ENCODE measurements at regions of chr2 and their contacts with region 1.

Region 1: DNA sequence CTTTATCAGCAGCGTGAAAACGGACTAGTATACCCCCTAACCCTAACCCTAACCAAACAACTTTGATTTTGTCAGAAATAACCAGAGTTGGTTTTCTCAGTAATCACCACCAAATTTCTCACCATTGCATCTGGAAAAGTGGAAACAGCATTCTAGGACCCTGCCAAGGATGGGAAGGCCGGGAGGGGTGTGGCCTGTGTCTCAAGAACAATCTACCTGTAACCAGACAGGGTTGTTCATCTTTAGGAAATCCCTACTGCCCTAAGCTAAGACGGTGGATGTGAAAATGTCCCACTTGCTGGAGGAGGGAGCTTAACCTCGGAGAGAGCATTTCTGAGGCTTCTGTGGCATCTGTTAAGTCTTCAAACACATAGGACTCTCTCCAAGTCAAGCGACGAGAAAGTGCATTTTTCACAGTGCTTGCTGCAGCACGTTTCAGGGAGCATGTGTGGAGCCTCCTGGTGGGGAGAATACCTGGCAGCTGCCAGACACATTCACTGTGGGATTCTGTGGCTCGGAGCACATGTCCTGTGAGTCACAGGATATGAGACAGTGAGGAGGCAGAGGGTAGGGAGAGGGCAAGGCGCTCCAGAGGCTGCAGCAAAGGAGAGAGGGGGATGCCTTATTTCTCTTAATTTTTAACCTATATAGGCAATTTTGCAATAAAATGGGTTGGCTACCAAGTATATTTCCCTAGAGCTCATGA is 207.5 kb downstream of the SPP2 start:
- DNase-seq: peak; percentile 96
- H3K4me3 ChIP-seq: no peak overlapping the region
- H3K27ac ChIP-seq: peak overlapping the region; percentile 70
- H3K4me1 ChIP-seq: peaks cover 11% of the 10 kb centered on the region
- H3K27me3 ChIP-seq: no peaks in the 10 kb centered on the region
- CTCF ChIP-seq: peak; percentile 84 to 87
- POLR2A ChIP-seq: peak; percentile 37

Region 2: DNA sequence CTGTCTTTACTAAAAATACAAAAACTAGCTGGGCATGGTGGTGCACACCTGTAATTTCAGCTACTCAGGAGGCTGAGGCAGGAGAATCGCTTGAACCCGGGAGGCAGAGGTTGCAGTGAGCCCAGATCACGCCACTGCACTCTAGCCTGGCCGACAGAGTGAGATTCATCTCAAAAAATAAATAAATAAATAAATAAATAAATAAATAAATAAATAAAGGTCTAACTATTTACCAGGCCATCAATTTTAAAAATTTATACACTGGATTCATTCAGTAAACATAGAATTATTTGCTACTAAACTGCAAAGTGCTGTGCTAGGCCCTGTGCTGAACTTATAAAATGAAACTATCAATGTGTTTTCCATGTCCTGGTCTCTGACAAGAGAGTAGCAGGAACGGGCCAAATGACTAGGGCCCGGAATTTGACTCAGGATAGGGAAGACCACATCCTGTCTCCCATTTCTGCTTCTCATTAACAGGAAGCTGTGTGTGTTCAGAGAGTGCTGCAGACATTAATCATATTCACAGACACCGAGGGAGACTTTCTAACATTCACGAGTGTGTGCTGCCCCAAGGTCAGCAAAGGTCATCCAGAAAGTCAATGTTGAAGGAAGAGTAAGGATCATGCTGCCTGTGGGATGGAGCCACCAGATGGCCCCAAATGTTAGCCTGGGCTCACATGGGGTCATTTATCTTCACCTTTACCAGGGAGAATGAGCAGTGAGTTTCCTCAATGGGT is 111.8 kb before region 1 on chr2:
- CTCF ChIA-PET with region 1: interaction called, 4 read pairs
- POLR2A ChIA-PET with region 1: no interaction called
- dilution Hi-C with region 1: no loop called
- intact Hi-C with region 1: loop called (anchors 1 kb)
- DNase-seq: peak; percentile 78
- H3K4me3 ChIP-seq: no peak overlapping the region
- H3K27ac ChIP-seq: peak overlapping the region; percentile 78
- H3K4me1 ChIP-seq: peaks cover 10% of the 10 kb centered on the region
- H3K27me3 ChIP-seq: no peaks in the 10 kb centered on the region
- CTCF ChIP-seq: no peak
- POLR2A ChIP-seq: no peak

Region 3: GRCh38 chr2:234203135-234203984 is 54.6 kb before region 1 on chr2:
- CTCF ChIA-PET with region 1: interaction called, 13 read pairs
- POLR2A ChIA-PET with region 1: no interaction called
- dilution Hi-C with region 1: no loop called
- intact Hi-C with region 1: loop called (anchors 1 kb)
- DNase-seq: peak; percentile 98
- H3K4me3 ChIP-seq: peak overlapping the region in 1 of 3 experiments; percentile 14
- H3K27ac ChIP-seq: peak overlapping the region; percentile 93
- H3K4me1 ChIP-seq: peaks cover 17% of the 10 kb centered on the region
- H3K27me3 ChIP-seq: no peaks in the 10 kb centered on the region
- CTCF ChIP-seq: no peak
- POLR2A ChIP-seq: no peak

Region 4: DNA sequence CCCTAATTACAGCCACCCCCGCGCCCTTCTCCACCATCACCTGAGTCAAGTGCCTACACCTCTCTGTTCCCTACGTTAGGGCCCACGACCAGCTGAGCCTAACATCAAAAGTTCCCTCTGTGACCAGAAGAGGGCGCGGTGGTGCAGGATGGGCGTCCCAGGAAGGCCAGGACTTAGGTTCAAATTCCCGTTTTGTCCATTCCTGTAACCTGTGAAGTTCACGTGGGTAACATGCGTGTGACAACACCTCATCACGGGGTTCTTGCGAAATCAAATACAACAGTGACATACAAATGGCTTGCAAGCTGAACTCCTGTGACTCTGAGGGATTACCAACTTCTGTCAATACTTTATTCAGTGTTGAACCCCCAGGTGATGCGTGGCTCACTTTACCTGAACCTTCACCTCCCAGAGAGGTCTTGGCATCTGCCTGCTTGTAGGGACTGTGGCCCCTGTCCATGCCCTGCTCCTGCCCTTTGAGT is 31.0 kb after region 1 on chr2:
- CTCF ChIA-PET with region 1: no interaction called
- POLR2A ChIA-PET with region 1: no interaction called
- dilution Hi-C with region 1: no loop called
- intact Hi-C with region 1: loop called (anchors 1 kb)
- DNase-seq: peak; percentile 65
- H3K4me3 ChIP-seq: no peak overlapping the region
- H3K27ac ChIP-seq: no peak overlapping the region
- H3K4me1 ChIP-seq: peaks cover 37% of the 10 kb centered on the region
- H3K27me3 ChIP-seq: no peaks in the 10 kb centered on the region
- CTCF ChIP-seq: peak; percentile 75 to 88
- POLR2A ChIP-seq: no peak

Region 5: DNA sequence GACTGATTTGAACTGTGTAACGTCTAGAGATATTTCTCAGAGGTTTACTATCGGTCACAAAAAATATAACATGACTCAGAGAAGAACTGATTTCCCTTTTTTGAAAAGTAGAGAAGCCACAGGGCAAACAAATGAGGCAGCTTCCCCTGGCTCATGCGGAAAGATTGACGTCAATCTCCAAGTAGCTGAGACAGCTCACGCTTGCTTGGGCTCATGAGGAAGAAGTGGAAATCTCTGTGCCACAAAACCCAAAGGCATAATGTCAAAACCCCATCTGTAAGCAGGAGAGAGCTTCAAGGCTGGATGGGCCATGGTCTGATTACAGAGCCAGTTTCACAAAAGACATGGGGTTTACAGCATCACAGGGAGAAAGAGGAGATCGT is 50.8 kb after region 1 on chr2:
- CTCF ChIA-PET with region 1: no interaction called
- POLR2A ChIA-PET with region 1: no interaction called
- dilution Hi-C with region 1: no loop called
- intact Hi-C with region 1: no loop called
- DNase-seq: peak; percentile 11
- H3K4me3 ChIP-seq: no peak overlapping the region
- H3K27ac ChIP-seq: no peak overlapping the region
- H3K4me1 ChIP-seq: no peaks in the 10 kb centered on the region
- H3K27me3 ChIP-seq: peaks cover 4 to 7% of the 10 kb centered on the region in 2 experiments
- CTCF ChIP-seq: no peak
- POLR2A ChIP-seq: no peak

Region 6: GRCh38 chr2:234500394-234501006 is 242.5 kb after region 1 on chr2:
- CTCF ChIA-PET with region 1: interaction called, 11 read pairs
- POLR2A ChIA-PET with region 1: no interaction called
- dilution Hi-C with region 1: no loop called
- intact Hi-C with region 1: loop called (anchors 1 kb)
- DNase-seq: peak; percentile 61
- H3K4me3 ChIP-seq: no peak overlapping the region
- H3K27ac ChIP-seq: no peak overlapping the region
- H3K4me1 ChIP-seq: peaks cover 3% of the 10 kb centered on the region
- H3K27me3 ChIP-seq: peaks cover 0 to 2% of the 10 kb centered on the region in 2 experiments
- CTCF ChIP-seq: peak; percentile 51 to 58
- POLR2A ChIP-seq: no peak

Region 7: DNA sequence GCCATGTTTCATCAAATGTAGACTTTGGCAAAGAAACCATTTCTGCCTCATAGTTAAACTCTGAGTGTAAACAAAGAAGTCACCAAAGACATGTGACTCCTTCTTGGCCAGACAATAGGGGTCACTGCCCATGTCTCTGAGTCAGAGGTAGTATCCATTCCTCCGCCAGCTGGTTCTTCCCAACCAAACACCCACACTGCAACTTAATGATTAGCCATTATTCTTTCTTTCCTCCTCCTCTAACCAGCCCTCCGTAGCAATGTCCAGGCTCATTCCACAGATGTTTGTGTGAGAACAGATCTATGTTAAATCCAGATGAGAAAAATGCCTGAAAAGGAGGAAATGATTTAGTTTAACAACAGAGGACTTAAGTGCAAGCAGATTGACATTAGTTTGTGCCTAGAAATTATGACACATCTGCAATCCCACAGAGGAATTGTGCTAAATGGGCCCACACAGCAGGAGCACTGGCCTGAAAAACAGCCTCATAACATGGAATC is 565.9 kb after region 1 on chr2:
- CTCF ChIA-PET with region 1: no interaction called
- POLR2A ChIA-PET with region 1: interaction called, 3 read pairs
- dilution Hi-C with region 1: no loop called
- intact Hi-C with region 1: loop called (anchors 10 kb)
- DNase-seq: peak; percentile 98
- H3K4me3 ChIP-seq: no peak overlapping the region
- H3K27ac ChIP-seq: peak overlapping the region; percentile 90
- H3K4me1 ChIP-seq: peaks cover 24% of the 10 kb centered on the region
- H3K27me3 ChIP-seq: no peaks in the 10 kb centered on the region
- CTCF ChIP-seq: no peak
- POLR2A ChIP-seq: peak; percentile 69